ENCODE measurements at regions of chr17 and their contacts with region 1.

Region 1: GRCh38 chr17:60135151-60135950 is 14.4 kb upstream of the CA4 start:
- DNase-seq: peak in 1 of 2 experiments; percentile 88
- H3K4me3 ChIP-seq: peak overlapping the region; percentile 76 to 95 (median 88)
- H3K27ac ChIP-seq: no peak overlapping the region
- H3K4me1 ChIP-seq: peaks cover 0 to 15% (median 8%) of the 10 kb centered on the region in 4 experiments; a peak in 6 of 7 replicates
- H3K27me3 ChIP-seq: peaks cover 34 to 59% (median 52%) of the 10 kb centered on the region in 4 experiments
- CTCF ChIP-seq: no peak
- EP300 ChIP-seq: no peak
- POLR2A ChIP-seq: peak in 1 of 2 experiments; percentile 54; a peak in 2 of 3 replicates
- RAD21 ChIP-seq: no peak

Region 2: GRCh38 chr17:60169921-60170742 is 34.8 kb after region 1 on chr17:
- CTCF ChIA-PET with region 1: interaction called, 51 read pairs
- POLR2A ChIA-PET with region 1: interaction called, 4 read pairs
- DNase-seq: no peak
- H3K4me3 ChIP-seq: no peak overlapping the region
- H3K27ac ChIP-seq: no peak overlapping the region
- H3K4me1 ChIP-seq: peaks cover 0 to 6% (median 2%) of the 10 kb centered on the region in 4 experiments; a peak in 4 of 7 replicates
- H3K27me3 ChIP-seq: no peaks in the 10 kb centered on the region
- CTCF ChIP-seq: no peak
- EP300 ChIP-seq: no peak
- POLR2A ChIP-seq: no peak
- RAD21 ChIP-seq: no peak

Measured in H1 (cell line).